OCI-LY7 (cell line): ENCODE measurements at regions of chr3 and their contacts with region 1.

Region 1: DNA sequence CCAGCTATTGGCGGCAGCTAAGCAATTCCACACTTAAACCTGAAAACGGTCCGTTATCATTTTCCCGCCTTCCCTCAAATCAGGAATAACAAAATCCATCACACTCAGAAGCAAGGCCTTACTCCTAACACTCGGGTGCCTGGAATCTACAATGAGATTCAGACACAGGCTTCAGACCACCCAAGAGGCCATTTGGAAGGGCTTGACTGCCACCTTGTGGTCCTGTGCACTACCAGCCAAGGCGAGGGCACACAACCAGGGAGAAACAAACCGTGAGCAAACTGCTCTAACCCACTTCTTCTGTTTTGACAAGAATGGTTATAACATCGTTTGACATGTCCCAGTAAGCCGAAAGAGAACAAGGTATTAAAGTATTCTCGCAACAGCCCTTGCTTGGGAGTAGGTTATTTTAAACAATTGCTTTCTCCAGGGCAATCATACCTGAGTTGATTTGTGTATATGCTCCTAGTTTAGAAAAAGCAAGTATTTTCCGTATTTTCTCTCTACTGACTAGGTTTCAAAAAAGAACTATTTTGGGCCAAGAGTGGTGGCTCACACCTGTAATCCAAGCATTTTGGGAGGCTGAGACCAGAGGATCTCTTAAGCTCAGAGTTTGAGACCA is 40.1 kb upstream of the TAFA4 start:
- DNase-seq: peak; percentile 62
- H3K4me3 ChIP-seq: no peak overlapping the region
- H3K27ac ChIP-seq: no peak overlapping the region
- H3K4me1 ChIP-seq: no peaks in the 10 kb centered on the region
- CTCF ChIP-seq: peak; percentile 86

Region 2: GRCh38 chr3:68639766-68640165 is 332.7 kb before region 1 on chr3:
- CTCF ChIA-PET with region 1: no interaction called
- POLR2A ChIA-PET with region 1: no interaction called
- intact Hi-C with region 1: no loop called
- DNase-seq: no peak
- H3K4me3 ChIP-seq: no peak overlapping the region
- H3K27ac ChIP-seq: no peak overlapping the region
- H3K4me1 ChIP-seq: no peaks in the 10 kb centered on the region
- CTCF ChIP-seq: no peak

Region 3: GRCh38 chr3:68893600-68894239 is 78.7 kb before region 1 on chr3:
- CTCF ChIA-PET with region 1: no interaction called
- POLR2A ChIA-PET with region 1: no interaction called
- intact Hi-C with region 1: loop called (anchors 5 kb)
- DNase-seq: peak; percentile 43
- H3K4me3 ChIP-seq: no peak overlapping the region
- H3K27ac ChIP-seq: no peak overlapping the region
- H3K4me1 ChIP-seq: no peaks in the 10 kb centered on the region
- CTCF ChIP-seq: peak; percentile 75

Region 4: GRCh38 chr3:68986481-68987208 is 14.2 kb after region 1 on chr3:
- CTCF ChIA-PET with region 1: no interaction called
- POLR2A ChIA-PET with region 1: no interaction called
- intact Hi-C with region 1: no loop called
- DNase-seq: no peak
- H3K4me3 ChIP-seq: no peak overlapping the region
- H3K27ac ChIP-seq: no peak overlapping the region
- H3K4me1 ChIP-seq: no peaks in the 10 kb centered on the region
- CTCF ChIP-seq: no peak

Region 5: GRCh38 chr3:70242297-70242882 is 1269.9 kb after region 1 on chr3:
- CTCF ChIA-PET with region 1: no interaction called
- POLR2A ChIA-PET with region 1: no interaction called
- intact Hi-C with region 1: no loop called
- DNase-seq: no peak
- H3K4me3 ChIP-seq: no peak overlapping the region
- H3K27ac ChIP-seq: no peak overlapping the region
- H3K4me1 ChIP-seq: no peaks in the 10 kb centered on the region
- CTCF ChIP-seq: no peak